ENCODE measurements at regions of chr10 and their contacts with region 1.

Region 1: GRCh38 chr10:100286051-100287033 is at the start of gene BLOC1S2:
- DNase-seq: peak; percentile 87 to 96 (median 96)
- ATAC-seq: peak; percentile 96
- H3K4me3 ChIP-seq: peak within 1 kb of the TSS; percentile 91
- H3K27ac ChIP-seq: peak within 1 kb of the TSS; percentile 82
- H3K4me1 ChIP-seq: peaks cover 15 to 17% of the 10 kb centered on the region in 2 experiments; a peak in 4 of 5 replicates
- H3K27me3 ChIP-seq: no peaks in the 10 kb centered on the region
- CTCF ChIP-seq: 0 out of 6 replicates have a peak, but pooled peaks of 1 of the 3 experiments have one; percentile 0
- EP300 ChIP-seq: no peak
- POLR2A ChIP-seq: peak; percentile 91
- RAD21 ChIP-seq: 0 out of 4 replicates have a peak, but pooled peaks of 1 of the 2 experiments have one; percentile 4
- polyA plus RNA-seq, gene BLOC1S2: 41.9 to 45.8 TPM

Region 2: GRCh38 chr10:100209303-100209702 is 77.0 kb before region 1 on chr10:
- CTCF ChIA-PET with region 1: no interaction called
- POLR2A ChIA-PET with region 1: no interaction called
- in situ Hi-C with region 1: no loop called
- intact Hi-C with region 1: no loop called
- DNase-seq: no peak
- ATAC-seq: no peak
- H3K4me3 ChIP-seq: no peak overlapping the region
- H3K27ac ChIP-seq: no peak overlapping the region
- H3K4me1 ChIP-seq: no peaks in the 10 kb centered on the region
- H3K27me3 ChIP-seq: no peaks in the 10 kb centered on the region
- CTCF ChIP-seq: no peak
- EP300 ChIP-seq: no peak
- POLR2A ChIP-seq: no peak
- RAD21 ChIP-seq: no peak

Region 3: GRCh38 chr10:100297242-100297641 is 10.9 kb after region 1 on chr10:
- CTCF ChIA-PET with region 1: no interaction called
- POLR2A ChIA-PET with region 1: interaction called, 11 read pairs
- in situ Hi-C with region 1: no loop called
- intact Hi-C with region 1: no loop called
- DNase-seq: no peak
- ATAC-seq: no peak
- H3K4me3 ChIP-seq: no peak overlapping the region
- H3K27ac ChIP-seq: no peak overlapping the region
- H3K4me1 ChIP-seq: no peaks in the 10 kb centered on the region; a peak in 1 of 5 replicates
- H3K27me3 ChIP-seq: peaks cover 5 to 22% of the 10 kb centered on the region in 2 experiments
- CTCF ChIP-seq: no peak
- EP300 ChIP-seq: no peak
- POLR2A ChIP-seq: no peak
- RAD21 ChIP-seq: no peak

Region 4: DNA sequence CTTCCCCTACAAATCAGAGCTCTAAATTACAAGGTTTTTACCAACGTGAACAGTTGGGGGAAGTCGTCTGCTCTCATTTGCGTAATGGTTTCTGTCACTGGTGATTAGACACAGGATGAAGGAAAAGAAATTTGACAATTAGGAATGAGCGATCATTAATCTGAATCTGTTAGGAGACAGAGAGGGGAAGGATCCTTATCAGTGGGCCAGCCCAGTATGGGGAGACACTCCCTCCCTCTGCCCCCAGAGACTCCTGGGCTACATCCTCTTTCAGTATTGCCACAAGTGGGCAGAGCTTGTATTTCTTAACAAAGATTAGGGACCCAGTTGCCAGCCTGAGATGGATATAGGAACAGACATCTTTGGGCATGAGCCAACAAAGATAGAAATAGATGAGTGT is 264.9 kb after region 1 on chr10:
- CTCF ChIA-PET with region 1: no interaction called
- POLR2A ChIA-PET with region 1: no interaction called
- in situ Hi-C with region 1: no loop called
- intact Hi-C with region 1: no loop called
- DNase-seq: no peak
- ATAC-seq: no peak
- H3K4me3 ChIP-seq: no peak overlapping the region
- H3K27ac ChIP-seq: no peak overlapping the region
- H3K4me1 ChIP-seq: no peaks in the 10 kb centered on the region
- H3K27me3 ChIP-seq: no peaks in the 10 kb centered on the region
- CTCF ChIP-seq: no peak
- EP300 ChIP-seq: no peak
- POLR2A ChIP-seq: no peak
- RAD21 ChIP-seq: no peak

Region 5: GRCh38 chr10:101272229-101272868 is 986.0 kb after region 1 on chr10:
- CTCF ChIA-PET with region 1: no interaction called
- POLR2A ChIA-PET with region 1: no interaction called
- in situ Hi-C with region 1: no loop called
- intact Hi-C with region 1: no loop called
- DNase-seq: peak; percentile 63 to 71 (median 64)
- ATAC-seq: peak; percentile 98
- H3K4me3 ChIP-seq: no peak overlapping the region
- H3K27ac ChIP-seq: no peak overlapping the region
- H3K4me1 ChIP-seq: no peaks in the 10 kb centered on the region; a peak in 1 of 5 replicates
- H3K27me3 ChIP-seq: peaks cover 3 to 5% of the 10 kb centered on the region in 2 experiments; a peak in 3 of 5 replicates
- CTCF ChIP-seq: peak; percentile 68 to 77 (median 70)
- EP300 ChIP-seq: no peak
- POLR2A ChIP-seq: no peak
- RAD21 ChIP-seq: peak; percentile 18 to 48